ENCODE measurements at regions of chr1 and their contacts with region 1.

Region 1: GRCh38 chr1:18597160-18598042 is 33.2 kb upstream of the PAX7 start:
- DNase-seq: peak; percentile 88
- ATAC-seq: peak; percentile 91
- H3K4me3 Mint-ChIP-seq: no peak overlapping the region
- H3K27ac Mint-ChIP-seq: no peak overlapping the region
- H3K4me1 Mint-ChIP-seq: peaks cover 12% of the 10 kb centered on the region
- H3K27me3 Mint-ChIP-seq: peaks cover 22% of the 10 kb centered on the region
- CTCF ChIP-seq: peak; percentile 91

Region 2: DNA sequence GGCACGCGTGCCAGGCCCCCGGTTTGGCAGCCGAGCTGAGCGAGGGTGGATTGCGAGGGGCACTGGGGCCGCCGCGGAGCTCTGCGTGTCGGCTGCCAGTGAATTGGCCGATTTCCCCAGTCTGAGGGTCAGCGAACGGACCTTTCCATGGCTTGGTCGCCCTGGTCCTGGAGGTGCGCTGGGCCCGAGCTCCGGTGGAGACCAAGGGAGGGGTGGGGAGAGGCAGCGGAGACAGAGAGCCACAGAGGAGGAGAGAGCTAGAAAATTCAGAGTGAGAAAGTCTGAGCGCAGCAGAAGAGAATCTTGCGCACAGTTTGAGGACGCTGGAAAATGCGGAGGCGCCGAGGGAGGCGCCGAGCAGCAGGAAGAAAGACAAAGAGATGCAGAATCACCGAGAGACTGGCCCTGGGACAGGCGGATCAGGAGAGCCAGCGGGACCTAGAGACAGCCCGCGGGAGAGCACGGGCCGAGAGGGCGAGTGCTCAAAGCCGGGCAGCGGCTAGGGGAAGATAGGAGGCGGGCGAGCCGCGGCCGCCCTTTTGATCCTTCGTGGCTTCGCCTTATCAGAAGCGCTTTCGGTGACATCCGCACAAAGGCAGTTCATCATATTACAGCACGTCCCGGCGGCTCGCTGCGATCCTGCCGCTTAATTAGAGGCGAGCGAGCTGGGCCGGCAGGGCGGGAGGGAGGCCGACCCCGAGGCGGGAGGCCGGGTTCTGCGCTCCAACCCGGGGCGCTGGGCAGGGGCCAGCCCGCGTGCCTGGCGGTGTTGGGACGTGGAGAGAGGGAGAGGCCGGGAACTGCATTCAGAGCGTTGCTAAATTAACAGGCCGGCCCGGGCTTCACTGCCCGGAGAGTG is 46.0 kb after region 1 on chr1:
- CTCF ChIA-PET with region 1: interaction called, 11 read pairs
- POLR2A ChIA-PET with region 1: no interaction called
- DNase-seq: peak; percentile 51
- ATAC-seq: peak; percentile 11
- H3K4me3 Mint-ChIP-seq: peak overlapping the region; percentile 61
- H3K27ac Mint-ChIP-seq: no peak overlapping the region
- H3K4me1 Mint-ChIP-seq: peaks cover 71% of the 10 kb centered on the region
- H3K27me3 Mint-ChIP-seq: peaks cover 99% of the 10 kb centered on the region
- CTCF ChIP-seq: no peak

Region 3: DNA sequence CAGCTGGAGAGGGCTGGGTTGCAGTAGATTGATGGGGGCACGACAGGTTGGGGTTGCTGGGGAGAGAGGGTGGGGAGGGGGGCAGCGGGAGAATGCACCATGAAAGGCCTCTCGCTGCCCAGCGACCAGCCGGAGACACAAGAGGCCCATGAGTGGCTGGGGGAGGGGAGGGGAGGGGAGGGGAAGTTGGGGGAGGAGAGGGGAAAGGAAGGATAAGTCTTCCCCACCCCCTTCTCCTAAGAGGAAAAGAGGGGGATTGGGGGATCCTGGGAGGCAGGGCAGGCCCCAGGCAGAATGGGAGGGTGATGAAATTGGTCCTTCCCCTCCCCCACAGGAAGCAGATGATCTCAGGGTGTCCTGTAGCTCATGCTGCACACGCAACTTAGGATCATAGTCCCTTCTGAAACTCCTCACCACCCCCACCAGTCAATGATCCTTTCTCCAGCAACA is 79.0 kb after region 1 on chr1:
- CTCF ChIA-PET with region 1: interaction called, 102 read pairs
- POLR2A ChIA-PET with region 1: no interaction called
- DNase-seq: peak; percentile 45
- ATAC-seq: peak; percentile 43
- H3K4me3 Mint-ChIP-seq: peak overlapping the region; percentile 21; the same call in 1 of the 2 replicates
- H3K27ac Mint-ChIP-seq: no peak overlapping the region
- H3K4me1 Mint-ChIP-seq: peaks cover 44% of the 10 kb centered on the region
- H3K27me3 Mint-ChIP-seq: peaks cover 84% of the 10 kb centered on the region
- CTCF ChIP-seq: no peak

Region 4: DNA sequence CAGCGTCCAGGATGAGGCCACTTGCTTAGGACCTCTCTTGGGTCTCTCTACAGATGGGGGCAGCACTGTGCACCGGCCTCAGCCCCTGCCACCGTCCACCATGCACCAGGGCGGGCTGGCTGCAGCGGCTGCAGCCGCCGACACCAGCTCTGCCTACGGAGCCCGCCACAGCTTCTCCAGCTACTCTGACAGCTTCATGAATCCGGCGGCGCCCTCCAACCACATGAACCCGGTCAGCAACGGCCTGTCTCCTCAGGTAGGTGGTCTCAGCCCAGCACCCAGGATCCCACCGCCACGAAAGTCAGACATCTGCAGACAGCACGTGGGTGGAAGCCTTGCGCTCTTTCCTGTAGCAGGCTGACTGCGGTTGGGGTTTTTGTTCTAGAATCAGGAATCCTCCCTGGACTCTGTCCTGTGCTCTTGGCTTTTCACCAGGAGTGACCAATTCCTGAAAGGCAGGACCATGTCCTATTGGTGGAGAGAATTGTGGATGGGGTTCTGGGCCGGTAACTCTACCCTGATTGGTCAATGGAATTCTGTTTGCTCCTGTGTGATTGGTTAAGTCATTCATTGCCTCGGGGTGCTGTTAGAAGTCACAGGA is 105.7 kb after region 1 on chr1:
- CTCF ChIA-PET with region 1: interaction called, 11 read pairs
- POLR2A ChIA-PET with region 1: no interaction called
- DNase-seq: peak; percentile 55
- ATAC-seq: peak; percentile 92
- H3K4me3 Mint-ChIP-seq: no peak overlapping the region
- H3K27ac Mint-ChIP-seq: no peak overlapping the region
- H3K4me1 Mint-ChIP-seq: no peaks in the 10 kb centered on the region
- H3K27me3 Mint-ChIP-seq: peaks cover 15% of the 10 kb centered on the region
- CTCF ChIP-seq: no peak

Region 5: GRCh38 chr1:18805925-18806849 is 208.8 kb after region 1 on chr1:
- CTCF ChIA-PET with region 1: interaction called, 15 read pairs
- POLR2A ChIA-PET with region 1: no interaction called
- DNase-seq: no peak
- ATAC-seq: no peak
- H3K4me3 Mint-ChIP-seq: no peak overlapping the region
- H3K27ac Mint-ChIP-seq: no peak overlapping the region
- H3K4me1 Mint-ChIP-seq: peaks cover 4% of the 10 kb centered on the region; the same call in 1 of the 2 replicates
- H3K27me3 Mint-ChIP-seq: no peaks in the 10 kb centered on the region; the same call in 1 of the 2 replicates
- CTCF ChIP-seq: no peak

Region 6: DNA sequence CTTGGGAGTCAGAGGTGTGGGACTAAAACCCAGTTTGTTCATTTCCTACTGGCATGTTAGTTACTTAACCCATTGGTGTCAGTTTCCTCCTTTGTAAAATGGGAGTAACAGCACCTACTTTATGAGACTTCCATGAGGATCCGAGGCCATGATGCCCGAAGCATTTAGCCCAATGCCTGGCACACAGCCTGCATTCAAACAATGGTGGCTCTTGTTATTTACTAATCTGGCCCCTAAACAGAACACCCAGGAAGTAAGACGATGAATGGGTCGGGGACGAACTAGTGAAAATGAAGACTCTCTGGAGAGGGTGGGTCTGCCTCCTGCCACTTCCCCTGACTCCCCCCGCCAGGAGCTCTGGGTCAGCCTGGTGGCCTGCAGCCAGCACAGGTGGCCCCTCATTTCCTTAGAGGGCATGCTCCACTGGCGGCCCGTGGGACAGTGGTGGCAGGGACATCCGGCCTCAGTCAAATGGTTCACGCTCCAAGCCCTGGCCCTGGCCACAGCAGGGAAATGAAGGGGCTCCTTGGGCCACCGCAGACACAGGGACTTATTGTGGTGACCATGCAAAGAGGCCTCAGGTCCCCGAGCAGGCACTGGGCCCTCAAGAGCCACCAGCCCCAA is 271.5 kb after region 1 on chr1:
- CTCF ChIA-PET with region 1: interaction called, 39 read pairs
- POLR2A ChIA-PET with region 1: no interaction called
- DNase-seq: no peak
- ATAC-seq: no peak
- H3K4me3 Mint-ChIP-seq: no peak overlapping the region
- H3K27ac Mint-ChIP-seq: 0 out of 2 replicates have a peak overlapping the region, but pooled peaks have one; percentile 15
- H3K4me1 Mint-ChIP-seq: no peaks in the 10 kb centered on the region
- H3K27me3 Mint-ChIP-seq: no peaks in the 10 kb centered on the region; the same call in 1 of the 2 replicates
- CTCF ChIP-seq: no peak

Region 7: DNA sequence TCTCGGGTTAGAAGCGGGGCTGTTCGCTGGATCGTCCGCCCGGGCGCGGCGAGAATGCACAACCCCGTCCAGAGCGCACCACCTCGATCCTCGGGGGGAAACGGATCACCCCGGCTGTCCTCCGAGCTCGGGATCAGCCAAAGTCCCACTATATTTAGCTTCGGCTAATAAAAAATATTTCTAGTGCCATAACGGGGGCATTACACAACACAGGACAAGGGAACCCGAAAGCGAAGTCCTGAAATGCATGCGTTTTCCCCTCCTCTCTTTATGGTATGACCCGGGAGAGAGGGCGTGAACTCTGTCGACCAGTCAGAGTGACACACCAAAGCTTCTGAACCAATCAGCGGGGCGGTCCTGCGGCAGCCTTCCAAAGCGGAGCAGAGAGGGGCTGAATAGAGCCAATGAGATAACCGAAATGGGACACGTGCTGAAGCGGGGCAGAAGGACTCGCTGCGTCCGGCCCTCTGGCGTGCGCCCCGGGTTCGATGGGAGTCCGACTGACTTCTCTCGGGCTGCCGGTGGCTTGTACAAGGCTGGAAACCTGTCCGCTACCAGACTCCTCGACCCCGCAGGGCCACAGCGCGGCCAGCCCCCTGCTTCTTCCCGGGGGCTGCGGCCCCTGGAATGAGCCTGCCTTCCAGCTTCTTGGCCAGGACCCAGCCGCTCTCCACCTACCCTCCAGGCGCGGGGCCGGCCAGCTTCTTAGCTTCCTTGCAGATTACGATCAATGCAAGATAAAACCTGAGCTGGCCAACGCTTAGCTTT is 305.3 kb after region 1 on chr1 and contains the start of gene ALDH4A1:
- CTCF ChIA-PET with region 1: interaction called, 10 read pairs
- POLR2A ChIA-PET with region 1: no interaction called
- DNase-seq: peak; percentile 96
- ATAC-seq: peak; percentile 95
- H3K4me3 Mint-ChIP-seq: peak within 1 kb of the TSS; percentile 98
- H3K27ac Mint-ChIP-seq: peak within 1 kb of the TSS; percentile 99
- H3K4me1 Mint-ChIP-seq: peaks cover 17% of the 10 kb centered on the region
- H3K27me3 Mint-ChIP-seq: no peaks in the 10 kb centered on the region; the same call in none of the 2 replicates
- CTCF ChIP-seq: no peak
- total RNA-seq, gene ALDH4A1: 31.0 to 37.5 TPM (median 36.2 TPM) in 3 replicates

Region 8: DNA sequence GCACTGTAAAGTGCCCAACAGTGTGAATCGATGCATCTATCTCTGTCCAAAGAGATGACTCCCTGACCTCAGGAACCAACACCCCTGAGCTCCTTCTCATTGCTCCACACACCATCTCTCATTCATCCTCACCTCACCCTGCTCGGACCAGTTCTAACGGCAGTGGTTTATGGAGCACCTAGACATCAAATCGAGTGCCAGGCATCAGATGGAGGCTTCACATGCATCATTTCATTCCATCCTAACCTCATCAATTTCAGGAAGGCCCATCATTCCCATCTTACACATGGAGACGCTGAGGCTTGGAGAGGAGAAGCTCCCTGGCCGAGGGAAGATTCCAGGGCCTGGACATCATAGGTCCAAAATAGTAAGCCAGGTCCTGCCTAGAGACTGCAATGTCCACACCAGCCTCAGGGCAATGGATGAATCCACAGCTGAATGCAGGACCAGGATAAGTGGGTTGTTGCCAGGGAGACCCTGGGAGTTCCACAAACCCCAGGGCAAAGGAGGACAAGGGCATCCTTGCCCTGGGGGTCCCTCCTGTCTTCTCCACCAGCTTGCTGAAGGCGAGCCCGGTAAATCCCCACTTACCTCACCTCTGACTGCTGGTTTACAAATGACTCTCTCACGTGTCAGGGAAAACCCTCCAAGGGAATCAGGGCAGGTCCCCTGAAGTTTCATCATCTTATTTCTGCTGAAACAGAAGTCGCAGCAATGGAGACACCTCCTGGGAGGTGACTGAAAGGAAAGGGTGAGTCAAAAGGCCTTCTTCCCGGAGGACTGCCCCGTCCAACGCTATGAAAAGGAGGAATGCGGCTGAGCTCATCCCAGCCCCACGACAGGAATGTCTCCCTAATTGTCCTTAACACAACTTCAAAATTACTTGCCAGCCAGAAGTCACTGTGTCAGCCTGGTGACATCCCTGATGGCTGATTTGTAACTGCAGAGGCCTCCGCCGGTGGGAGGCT is 368.1 kb after region 1 on chr1:
- CTCF ChIA-PET with region 1: no interaction called
- POLR2A ChIA-PET with region 1: no interaction called
- DNase-seq: peak; percentile 31
- ATAC-seq: peak; percentile 83
- H3K4me3 Mint-ChIP-seq: no peak overlapping the region
- H3K27ac Mint-ChIP-seq: no peak overlapping the region
- H3K4me1 Mint-ChIP-seq: peaks cover 5% of the 10 kb centered on the region
- H3K27me3 Mint-ChIP-seq: peaks cover 14% of the 10 kb centered on the region
- CTCF ChIP-seq: no peak

Measured in WTC11 (cell line).